Activated T-helper 1 cell treated with anti-CD3 and anti-CD28 coated beads, Interleukin-12 subunit alpha, Interleukin-12 subunit beta, Interleukin-2, Interleukin-4 antibody, amounts not matched to agents 30 ng/mL and 10 ng/mL and 1 ng/mL, durations not matched to agents 14 hours and 24 hours and 36 hours (primary cell): ENCODE measurements at regions of chr22 and their contacts with region 1.

Region 1: DNA sequence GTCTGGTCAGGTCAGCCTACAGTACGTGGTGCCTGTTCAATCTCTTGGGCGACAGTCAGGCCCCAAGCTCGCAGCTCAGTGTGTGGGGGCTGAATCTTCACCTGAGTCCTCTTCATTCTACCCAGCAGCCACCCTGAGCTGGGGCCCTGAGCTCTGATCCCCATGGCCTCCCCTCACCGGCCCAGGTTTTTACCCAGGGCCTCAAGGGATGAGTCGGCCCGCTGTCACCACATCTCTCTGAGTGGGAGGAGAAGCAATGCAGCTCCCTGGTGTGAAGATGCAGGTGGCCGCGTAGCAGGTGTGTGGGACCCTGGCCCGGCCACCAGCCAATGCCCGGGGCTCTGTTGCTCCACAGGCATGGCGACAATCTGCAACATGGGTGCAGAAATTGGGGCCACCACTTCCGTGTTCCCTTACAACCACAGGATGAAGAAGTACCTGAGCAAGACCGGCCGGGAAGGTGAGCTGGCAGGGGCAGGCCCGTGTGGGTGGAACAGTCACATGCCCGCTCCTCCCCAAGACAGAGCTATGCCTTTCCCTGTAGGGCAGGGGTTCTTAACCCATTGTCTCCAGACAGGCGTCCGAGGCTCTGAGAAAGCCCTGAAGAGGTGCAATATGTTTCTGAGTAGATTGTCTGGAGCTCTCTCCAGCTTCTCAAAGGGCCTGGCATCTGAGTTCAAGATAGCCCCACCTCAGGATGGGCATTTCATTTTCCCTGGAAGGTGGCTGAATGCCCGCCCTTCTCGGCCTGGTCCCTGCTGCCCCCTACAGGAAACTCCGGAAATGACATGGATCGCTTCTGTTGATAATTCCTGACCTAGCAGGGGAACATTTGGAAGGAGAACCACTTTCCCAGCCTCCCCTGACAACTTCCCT is 26.9 kb downstream of the POLR3H start:
- DNase-seq: no peak
- H3K4me3 Mint-ChIP-seq: no peak overlapping the region
- H3K27ac Mint-ChIP-seq: no peak overlapping the region
- H3K4me1 Mint-ChIP-seq: no peaks in the 10 kb centered on the region
- H3K27me3 Mint-ChIP-seq: no peaks in the 10 kb centered on the region

Region 2: DNA sequence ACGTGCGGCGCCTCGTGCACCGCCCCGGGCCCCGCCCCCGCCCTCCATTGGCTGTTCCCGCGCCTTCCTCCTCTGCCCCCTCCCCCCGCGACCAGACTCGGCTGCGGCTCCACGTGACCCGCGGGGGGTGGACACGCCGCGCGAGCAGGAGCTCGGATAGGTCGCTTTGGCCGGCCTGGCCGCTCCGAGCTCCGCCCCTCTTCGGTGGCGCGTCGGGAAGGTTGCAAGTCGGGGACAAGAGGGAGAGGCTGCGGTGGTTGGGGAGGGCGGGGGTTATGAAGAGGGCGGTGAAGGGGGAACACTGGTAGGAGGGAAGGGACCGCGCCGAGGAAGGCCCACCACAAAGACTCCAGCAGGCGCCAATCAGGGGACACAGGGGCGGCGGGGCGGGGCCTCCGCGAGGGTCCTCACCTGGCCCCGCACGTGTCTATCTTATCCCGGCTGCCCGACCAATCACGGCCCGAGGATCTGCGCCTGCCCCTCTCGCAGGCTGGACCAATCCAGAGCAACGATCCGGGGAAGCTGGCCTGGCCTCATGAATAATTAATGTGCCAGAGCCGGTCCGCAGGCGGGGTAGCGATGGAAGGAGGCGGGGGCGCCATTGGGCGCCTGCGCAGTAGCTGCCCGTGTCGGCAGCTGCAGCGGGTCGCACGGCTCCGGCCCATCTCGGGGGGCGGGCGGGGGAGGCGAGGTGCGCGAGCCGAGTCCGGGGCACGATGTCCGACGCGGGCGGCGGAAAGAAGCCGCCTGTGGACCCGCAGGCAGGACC is 135.9 kb before region 1 on chr22 and contains the start of gene TEF:
- intact Hi-C with region 1: no loop called
- DNase-seq: peak; percentile 97
- H3K4me3 Mint-ChIP-seq: peak within 1 kb of the TSS; percentile 85
- H3K27ac Mint-ChIP-seq: peak within 1 kb of the TSS; percentile 93
- H3K4me1 Mint-ChIP-seq: peaks cover 6% of the 10 kb centered on the region
- H3K27me3 Mint-ChIP-seq: no peaks in the 10 kb centered on the region
- total RNA-seq, gene TEF: 1.6 and 2.1 TPM in 2 replicates

Region 3: DNA sequence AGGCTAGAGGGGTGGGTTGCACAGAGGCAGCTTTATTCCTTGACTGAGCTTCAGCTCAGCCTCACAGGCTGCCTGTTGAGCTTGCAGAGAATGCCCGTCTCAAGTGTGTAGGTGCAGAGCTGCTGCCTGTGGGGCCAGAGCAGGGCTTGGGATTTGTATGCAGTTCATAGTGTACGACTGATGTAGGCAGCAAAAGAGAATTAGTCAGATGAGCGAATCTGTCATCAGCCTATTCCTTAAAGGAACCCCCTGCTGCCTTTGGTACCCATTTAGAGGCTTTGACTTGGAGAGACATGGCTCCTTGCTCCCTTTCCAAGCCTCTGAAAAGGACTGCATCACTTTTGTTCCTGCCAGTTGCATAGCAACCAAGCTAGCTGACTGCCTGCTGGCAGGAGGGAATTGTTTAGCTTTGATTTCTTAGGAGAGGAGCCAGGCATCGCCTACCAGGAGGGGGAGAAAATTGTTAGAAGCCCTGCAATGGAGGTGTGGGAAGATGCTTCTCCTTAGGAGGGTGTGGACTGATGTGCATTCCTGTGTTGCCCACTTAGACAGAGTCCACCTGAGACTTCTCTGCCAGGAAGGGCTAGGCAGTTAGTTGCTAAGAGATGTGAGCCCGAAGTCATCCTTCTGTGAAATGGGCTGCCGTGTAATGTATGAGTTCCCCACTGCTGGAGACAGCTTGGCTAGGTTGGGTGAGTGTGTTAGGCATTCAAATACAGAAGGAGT is 37.6 kb before region 1 on chr22:
- intact Hi-C with region 1: loop called (anchors 2 kb)
- DNase-seq: no peak
- H3K4me3 Mint-ChIP-seq: no peak overlapping the region
- H3K27ac Mint-ChIP-seq: no peak overlapping the region
- H3K4me1 Mint-ChIP-seq: peaks cover 33% of the 10 kb centered on the region
- H3K27me3 Mint-ChIP-seq: no peaks in the 10 kb centered on the region

Region 4: GRCh38 chr22:41543854-41544670 is 26.7 kb after region 1 on chr22 and contains the start of gene POLR3H:
- intact Hi-C with region 1: no loop called
- DNase-seq: peak; percentile 97
- H3K4me3 Mint-ChIP-seq: peak within 1 kb of the TSS; percentile 93
- H3K27ac Mint-ChIP-seq: peak within 1 kb of the TSS; percentile 84
- H3K4me1 Mint-ChIP-seq: peaks cover 40% of the 10 kb centered on the region
- H3K27me3 Mint-ChIP-seq: peaks cover 3% of the 10 kb centered on the region
- total RNA-seq, gene POLR3H: 51.8 and 52.0 TPM in 2 replicates